ENCODE measurements at regions of chr9 and their contacts with region 1.

Region 1: GRCh38 chr9:96317335-96317980 is 15.5 kb upstream of the HSD17B3 start:
- DNase-seq: peak; percentile 13 to 19
- ATAC-seq: peak in 1 of 2 donors; percentile 44
- H3K4me3 ChIP-seq: no peak overlapping the region
- H3K27ac ChIP-seq: no peak overlapping the region
- H3K4me1 ChIP-seq: no peaks in the 10 kb centered on the region
- H3K27me3 ChIP-seq: no peaks in the 10 kb centered on the region
- CTCF ChIP-seq: peak; percentile 33 to 80 (median 58)
- POLR2A ChIP-seq: no peak

Region 2: DNA sequence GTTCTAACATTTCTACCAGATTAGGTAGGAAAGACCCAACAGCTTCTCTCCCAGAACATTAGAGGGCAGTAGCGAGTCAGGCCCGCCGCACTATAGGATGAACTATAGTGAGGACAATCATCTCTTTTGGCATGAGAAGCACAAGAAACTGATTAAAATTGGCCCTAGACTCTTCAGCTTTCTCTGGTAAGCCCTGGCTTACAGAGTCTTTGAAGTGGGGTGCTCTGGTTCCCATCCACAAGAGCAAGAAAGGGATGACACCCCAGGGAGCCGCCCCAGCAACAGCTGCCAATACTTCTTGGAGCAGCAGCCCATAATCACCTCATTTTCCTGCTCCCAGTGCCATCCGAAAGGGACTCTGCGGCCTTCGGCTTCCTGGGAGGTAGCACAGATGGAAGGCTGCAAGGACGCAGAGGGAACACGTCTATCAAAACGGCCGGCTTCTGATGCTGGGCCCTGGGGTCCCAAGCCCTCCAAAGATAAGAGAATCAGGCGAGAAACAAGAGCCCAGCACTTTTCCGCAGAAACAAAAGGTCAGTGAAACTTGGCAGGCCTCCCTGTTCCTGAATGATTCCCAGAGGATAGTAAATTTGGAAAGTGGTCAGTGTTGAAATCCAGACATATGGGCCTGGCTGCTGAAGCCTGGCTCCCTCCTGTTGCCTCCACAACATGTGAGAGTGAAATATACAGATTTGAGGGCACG is 84.8 kb before region 1 on chr9:
- in situ Hi-C with region 1: no loop called
- intact Hi-C with region 1: loop called (anchors 5 kb)
- DNase-seq: peak; percentile 41 to 49
- ATAC-seq: peak; percentile 86 to 89
- H3K4me3 ChIP-seq: peak overlapping the region in 2 of 4 donors; percentile 4 to 33
- H3K27ac ChIP-seq: peak overlapping the region; percentile 42 to 78 (median 71)
- H3K4me1 ChIP-seq: peaks cover 6 to 8% of the 10 kb centered on the region in 2 donors
- H3K27me3 ChIP-seq: no peaks in the 10 kb centered on the region
- CTCF ChIP-seq: peak in 3 of 5 experiments; percentile 49 to 72 (median 68)
- POLR2A ChIP-seq: no peak

Region 3: GRCh38 chr9:96293498-96294158 is 23.8 kb before region 1 on chr9:
- in situ Hi-C with region 1: no loop called
- intact Hi-C with region 1: no loop called
- DNase-seq: no peak
- ATAC-seq: no peak
- H3K4me3 ChIP-seq: no peak overlapping the region
- H3K27ac ChIP-seq: no peak overlapping the region
- H3K4me1 ChIP-seq: no peaks in the 10 kb centered on the region
- H3K27me3 ChIP-seq: no peaks in the 10 kb centered on the region
- CTCF ChIP-seq: no peak
- POLR2A ChIP-seq: no peak

Measured in gastrocnemius medialis (tissue), 4 donors.